Heart left ventricle (tissue), 16 donors: ENCODE measurements at regions of chr13 and their contacts with region 1.

Region 1: GRCh38 chr13:44373601-44374348 is at the start of gene SERP2:
- DNase-seq: peak; percentile 36 to 70 (median 53)
- ATAC-seq: peak; percentile 43 to 84 (median 80)
- H3K4me3 ChIP-seq: peak within 1 kb of the TSS; percentile 37 to 95 (median 68)
- H3K27ac ChIP-seq: peak within 1 kb of the TSS; percentile 2 to 80 (median 50)
- H3K4me1 ChIP-seq: peaks cover 0 to 21% (median 7%) of the 10 kb centered on the region in 12 donors
- H3K27me3 ChIP-seq: peaks cover 0 to 18% (median 0%) of the 10 kb centered on the region in 9 donors
- CTCF ChIP-seq: peak in 1 of 12 donors; percentile 4
- POLR2A ChIP-seq: no peak
- total RNA-seq, gene SERP2: 9.6 to 16.5 (median 12.8) TPM

Region 2: GRCh38 chr13:44191504-44192171 is 182.1 kb before region 1 on chr13:
- intact Hi-C with region 1: loop called in 1 of 10 experiments (anchors 5 kb)
- DNase-seq: peak in 4 of 5 donors; percentile 38 to 62 (median 58)
- ATAC-seq: peak; percentile 89 to 94 (median 94)
- H3K4me3 ChIP-seq: peak overlapping the region in 5 of 12 donors; percentile 9 to 28 (median 10)
- H3K27ac ChIP-seq: peak overlapping the region in 7 of 12 donors; percentile 13 to 62 (median 32)
- H3K4me1 ChIP-seq: peaks cover 0 to 7% (median 0%) of the 10 kb centered on the region in 12 donors
- H3K27me3 ChIP-seq: no peaks in the 10 kb centered on the region
- CTCF ChIP-seq: peak; percentile 57 to 85 (median 75)
- POLR2A ChIP-seq: no peak

Region 3: DNA sequence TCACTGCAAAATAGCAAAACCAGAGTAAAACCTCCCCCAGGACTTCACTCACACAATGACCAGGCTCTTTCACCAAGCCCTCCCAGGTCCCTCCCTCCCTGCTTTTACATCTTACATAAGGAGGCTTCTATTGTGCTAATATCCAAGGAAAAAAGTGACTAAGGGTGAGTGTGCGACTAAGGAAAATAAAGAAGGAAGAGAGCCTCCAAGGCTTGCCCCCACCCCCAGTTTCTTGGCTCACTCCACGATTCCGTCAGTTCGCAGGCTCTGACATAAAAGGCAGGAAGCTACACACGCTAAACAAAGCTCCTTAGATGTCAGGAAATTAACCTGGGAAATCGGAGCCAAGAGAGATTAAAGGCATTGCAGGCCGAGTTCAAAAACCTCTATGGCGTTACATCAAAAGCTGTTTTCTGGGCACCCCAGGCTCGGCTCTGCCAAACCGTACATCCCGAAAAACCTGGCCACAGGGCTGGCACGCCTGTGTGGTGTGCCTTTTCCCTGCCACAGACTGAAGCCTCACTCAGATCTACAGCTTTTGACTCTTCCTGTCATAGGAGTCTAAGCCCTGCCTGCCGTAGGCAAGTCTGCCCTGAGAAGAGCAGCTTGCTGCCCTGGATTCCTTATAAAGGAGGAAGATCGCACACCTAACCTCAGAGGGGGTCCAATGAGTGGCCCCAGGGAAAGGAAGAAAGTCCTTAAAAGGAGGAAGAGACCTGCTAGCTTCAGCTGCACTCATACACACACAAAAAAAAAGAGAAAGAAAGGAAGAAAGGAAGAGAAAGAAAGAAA is 67.2 kb before region 1 on chr13:
- intact Hi-C with region 1: loop called in 2 of 10 experiments (anchors 5 to 10 kb)
- DNase-seq: peak; percentile 62 to 86 (median 77)
- ATAC-seq: peak; percentile 34 to 84 (median 61)
- H3K4me3 ChIP-seq: peak overlapping the region in 3 of 12 donors; percentile 3 to 20 (median 16)
- H3K27ac ChIP-seq: peak overlapping the region; percentile 69 to 96 (median 88)
- H3K4me1 ChIP-seq: peaks cover 18 to 81% (median 57%) of the 10 kb centered on the region in 12 donors
- H3K27me3 ChIP-seq: no peaks in the 10 kb centered on the region
- CTCF ChIP-seq: no peak
- POLR2A ChIP-seq: no peak

Region 4: DNA sequence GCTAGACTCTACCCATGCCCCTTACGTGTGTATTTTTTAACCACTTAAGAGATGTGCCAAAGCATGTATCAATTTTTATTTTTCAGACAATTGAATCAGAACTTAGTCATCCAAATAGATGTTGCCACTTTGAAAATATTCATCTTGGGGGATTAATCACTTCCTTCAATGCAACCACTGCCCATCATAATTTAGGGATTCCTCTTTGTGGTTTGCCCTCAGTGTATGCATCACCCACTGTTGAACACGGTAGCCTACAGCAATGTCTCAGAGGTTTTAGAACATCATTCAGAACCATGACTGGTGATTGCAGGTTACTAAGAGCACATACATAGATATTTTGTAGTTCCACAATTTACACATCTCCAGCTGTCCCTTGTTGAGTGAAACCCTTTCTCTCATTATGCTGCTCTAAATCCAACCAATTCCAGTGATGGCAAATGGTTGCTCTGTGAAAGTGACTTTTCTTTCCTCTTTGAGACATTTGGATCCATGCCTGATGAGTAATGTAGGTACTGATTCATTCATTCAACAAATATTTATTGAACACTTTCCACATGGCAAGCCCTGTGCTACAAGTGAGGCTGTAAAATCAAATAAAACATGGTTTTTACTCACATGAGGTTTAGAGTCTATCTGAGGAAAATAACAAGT is 60.8 kb before region 1 on chr13:
- intact Hi-C with region 1: loop called in 2 of 10 experiments (anchors 5 to 10 kb)
- DNase-seq: no peak
- ATAC-seq: no peak
- H3K4me3 ChIP-seq: no peak overlapping the region
- H3K27ac ChIP-seq: no peak overlapping the region
- H3K4me1 ChIP-seq: peaks cover 0 to 26% (median 14%) of the 10 kb centered on the region in 12 donors
- H3K27me3 ChIP-seq: no peaks in the 10 kb centered on the region
- CTCF ChIP-seq: no peak
- POLR2A ChIP-seq: no peak